ENCODE measurements at regions of chr6 and their contacts with region 1.

Region 1: DNA sequence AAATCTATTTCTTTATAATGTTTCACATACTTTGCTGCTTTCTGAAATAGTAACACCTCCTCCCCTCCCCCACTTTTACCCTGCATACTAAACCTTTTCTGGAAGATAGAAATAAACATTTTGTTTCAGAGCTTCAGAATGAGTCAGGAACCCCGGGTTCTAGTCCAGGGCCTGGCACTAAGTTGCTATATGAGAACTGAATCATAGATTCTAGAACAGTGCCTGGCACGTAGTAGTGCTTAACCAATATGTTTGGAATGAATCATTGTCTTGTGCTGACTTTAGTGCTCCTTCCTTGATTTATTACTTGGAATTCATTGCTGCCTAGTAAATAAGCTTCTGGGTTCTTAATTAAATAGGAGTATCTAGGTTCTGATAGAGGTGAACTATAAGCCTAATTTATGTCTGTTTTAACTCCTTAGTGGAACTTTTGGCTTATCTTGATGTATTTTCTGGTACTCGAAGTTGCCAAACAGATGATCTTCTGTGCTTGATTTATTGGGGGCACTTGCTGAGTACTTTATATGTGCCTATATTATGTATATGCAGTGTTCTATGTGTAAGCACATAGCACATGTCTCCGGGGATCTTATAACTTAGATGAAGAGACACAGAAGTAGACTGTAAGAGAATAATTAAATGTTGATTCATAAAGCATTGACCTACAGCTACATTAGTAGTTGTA is 18.6 kb downstream of the TAB2 start:
- DNase-seq: no peak
- ATAC-seq: peak; percentile 61
- H3K4me3 ChIP-seq: no peak overlapping the region
- H3K4me3 Mint-ChIP-seq: peak overlapping the region in 9 of 10 donors; percentile 0 to 73 (median 50)
- H3K27ac ChIP-seq: no peak overlapping the region
- H3K27ac Mint-ChIP-seq: peak overlapping the region in 8 of 9 donors; percentile 6 to 82 (median 23)
- H3K4me1 ChIP-seq: peaks cover 40 to 44% of the 10 kb centered on the region in 2 donors
- H3K4me1 Mint-ChIP-seq: peaks cover 67 to 100% (median 88%) of the 10 kb centered on the region in 7 donors
- H3K27me3 ChIP-seq: no peaks in the 10 kb centered on the region
- H3K27me3 Mint-ChIP-seq: no peaks in the 10 kb centered on the region

Region 2: DNA sequence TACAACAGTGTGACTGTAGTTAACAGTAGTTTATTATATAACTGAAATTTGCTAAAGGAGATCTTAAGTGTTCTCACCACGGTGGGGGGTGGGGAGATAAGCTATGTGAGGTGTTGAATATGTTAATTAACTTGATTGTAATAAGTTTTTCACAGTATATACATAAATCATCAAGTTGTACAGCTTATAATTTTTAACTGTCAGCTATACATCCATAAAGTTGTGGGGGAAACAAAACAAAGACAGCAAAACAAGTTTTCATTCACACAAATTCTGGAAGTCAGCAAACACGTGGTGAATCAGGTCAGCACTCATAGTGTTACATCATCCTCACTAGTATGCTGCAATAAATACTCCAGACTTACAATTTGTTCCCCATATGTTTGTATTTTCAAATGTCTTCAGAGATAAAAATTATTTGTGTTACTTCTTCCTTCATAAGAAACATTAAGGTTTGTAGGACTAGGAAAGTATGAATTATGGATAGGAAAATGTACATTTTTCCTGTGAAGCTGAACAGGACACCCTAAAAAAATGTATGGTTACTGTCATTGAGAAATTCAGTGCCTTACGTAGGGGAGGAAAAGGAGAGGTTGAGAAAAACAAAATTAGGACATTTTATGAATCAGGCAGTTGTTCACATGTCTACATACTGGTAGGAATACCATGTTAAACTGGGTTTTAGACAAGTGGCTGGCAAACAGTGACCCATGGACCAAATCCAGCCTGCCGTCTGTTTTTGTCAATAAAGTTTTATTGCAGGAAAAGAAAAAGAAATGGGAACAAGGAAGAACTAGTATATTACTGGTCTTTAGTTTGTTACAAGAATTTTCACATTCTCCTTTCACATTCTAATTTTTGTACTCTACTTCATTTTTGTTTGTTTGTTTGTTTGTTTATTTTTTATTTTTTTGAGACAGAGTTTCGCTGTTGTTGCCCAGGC is 70.0 kb after region 1 on chr6:
- CTCF ChIA-PET with region 1: no interaction called
- POLR2A ChIA-PET with region 1: no interaction called
- intact Hi-C with region 1: loop called in 1 of 2 experiments (anchors 5 kb)
- DNase-seq: no peak
- ATAC-seq: peak; percentile 49
- H3K4me3 ChIP-seq: no peak overlapping the region
- H3K4me3 Mint-ChIP-seq: no peak overlapping the region
- H3K27ac ChIP-seq: no peak overlapping the region
- H3K27ac Mint-ChIP-seq: peak overlapping the region in 7 of 9 donors; percentile 41 to 79 (median 48)
- H3K4me1 ChIP-seq: no peaks in the 10 kb centered on the region
- H3K4me1 Mint-ChIP-seq: peaks cover 0 to 51% (median 9%) of the 10 kb centered on the region in 7 donors
- H3K27me3 ChIP-seq: no peaks in the 10 kb centered on the region
- H3K27me3 Mint-ChIP-seq: no peaks in the 10 kb centered on the region